CD8-positive, alpha-beta T cell (primary cell): ENCODE measurements at regions of chr1 and their contacts with region 1.

Region 1: DNA sequence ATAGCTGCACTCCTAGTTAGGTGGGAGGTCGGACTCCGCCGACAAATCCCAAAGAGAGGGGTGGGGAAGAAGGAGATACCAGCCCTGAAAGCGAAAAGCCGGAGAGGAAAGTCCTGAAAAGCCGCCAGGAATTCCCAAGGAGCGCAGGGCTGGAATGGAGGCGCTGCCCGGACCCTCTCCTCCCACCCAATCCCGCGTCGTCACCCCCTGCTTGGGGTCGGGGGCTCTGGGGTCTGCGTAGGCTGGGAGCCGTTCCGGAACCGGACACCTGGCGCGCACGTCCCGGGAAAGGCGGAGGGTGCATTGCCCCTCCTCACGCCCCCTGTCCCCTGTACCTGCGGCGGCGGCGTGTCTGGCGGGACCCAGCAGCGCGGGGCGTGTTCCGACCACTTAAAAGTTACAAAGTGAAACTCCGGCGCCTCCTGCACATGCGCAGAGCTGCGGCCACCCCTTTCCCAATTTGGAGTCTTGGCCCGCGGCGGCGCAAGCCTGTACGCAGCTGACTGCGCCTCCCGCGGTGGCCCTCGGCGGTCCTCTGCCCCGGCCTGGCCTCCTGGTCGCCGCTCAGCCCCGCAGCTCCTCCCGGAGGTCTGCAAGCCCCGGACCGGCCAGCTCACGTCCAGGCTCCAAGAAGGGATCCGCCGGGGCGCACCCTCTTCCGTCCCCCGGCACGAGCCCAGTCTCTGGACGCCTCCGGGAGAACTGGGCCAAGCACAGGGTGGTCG is at the start of gene TMEM63A:
- DNase-seq: peak; percentile 78 to 95 (median 92)
- ATAC-seq: peak; percentile 72
- H3K4me3 ChIP-seq: peak within 1 kb of the TSS; percentile 85 to 100
- H3K4me3 Mint-ChIP-seq: peak within 1 kb of the TSS; percentile 94
- H3K27ac ChIP-seq: peak within 1 kb of the TSS; percentile 65 to 84
- H3K27ac Mint-ChIP-seq: peak within 1 kb of the TSS; percentile 97
- H3K4me1 ChIP-seq: peaks cover 42% of the 10 kb centered on the region
- H3K4me1 Mint-ChIP-seq: peaks cover 52% of the 10 kb centered on the region
- H3K27me3 ChIP-seq: no peaks in the 10 kb centered on the region
- H3K27me3 Mint-ChIP-seq: no peaks in the 10 kb centered on the region
- CTCF ChIP-seq: no peak
- total RNA-seq, gene TMEM63A: 132 to 144 TPM

Region 2: DNA sequence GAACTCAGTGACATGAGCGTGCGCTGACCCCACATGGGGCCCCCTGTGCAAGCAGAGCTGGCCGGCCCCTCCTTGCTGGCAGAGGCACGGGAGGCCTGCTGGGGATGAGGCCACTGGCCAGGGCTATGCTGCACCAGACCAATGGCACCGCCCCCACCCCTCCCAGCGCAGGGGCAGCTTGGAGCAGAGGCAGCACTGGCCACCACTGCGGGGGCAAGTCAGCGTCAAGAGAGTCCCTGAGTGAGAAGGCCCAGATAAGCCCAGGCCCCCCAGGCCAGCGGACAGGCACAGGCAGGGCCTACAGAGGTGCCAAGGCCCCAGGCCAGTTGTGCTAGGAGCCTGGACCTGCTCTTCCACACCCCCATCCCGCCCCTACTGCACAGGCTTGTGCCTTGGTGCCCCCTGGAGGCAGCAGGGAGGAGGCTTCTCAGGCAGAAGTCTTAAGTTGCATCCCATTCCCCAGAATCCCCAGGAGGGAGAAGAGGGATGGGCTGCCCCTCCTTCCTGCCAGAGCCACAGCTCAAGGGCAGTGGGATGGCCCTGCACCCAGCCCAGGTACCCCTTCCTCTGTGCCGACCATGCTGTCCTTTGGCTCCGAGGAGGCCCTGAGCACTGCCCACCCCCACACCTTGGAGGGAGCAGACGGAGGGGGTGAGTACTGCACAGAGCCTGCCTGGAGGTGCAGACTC is 36.4 kb before region 1 on chr1:
- CTCF ChIA-PET with region 1: interaction called, 6 read pairs
- POLR2A ChIA-PET with region 1: interaction called, 27 read pairs
- intact Hi-C with region 1: loop called in 1 of 2 experiments (anchors 2 kb)
- DNase-seq: peak in 5 of 9 experiments; percentile 27 to 51 (median 39)
- ATAC-seq: no peak
- H3K4me3 ChIP-seq: no peak overlapping the region
- H3K4me3 Mint-ChIP-seq: no peak overlapping the region
- H3K27ac ChIP-seq: no peak overlapping the region
- H3K27ac Mint-ChIP-seq: peak overlapping the region; percentile 52
- H3K4me1 ChIP-seq: peaks cover 54% of the 10 kb centered on the region
- H3K4me1 Mint-ChIP-seq: peaks cover 64% of the 10 kb centered on the region
- H3K27me3 ChIP-seq: no peaks in the 10 kb centered on the region
- H3K27me3 Mint-ChIP-seq: no peaks in the 10 kb centered on the region
- CTCF ChIP-seq: peak; percentile 16

Region 3: GRCh38 chr1:225866061-225866837 is 15.9 kb before region 1 on chr1:
- CTCF ChIA-PET with region 1: interaction called, 6 read pairs
- POLR2A ChIA-PET with region 1: interaction called, 29 read pairs
- intact Hi-C with region 1: loop called (anchors 1 kb)
- DNase-seq: peak in 8 of 9 experiments; percentile 57 to 87 (median 78)
- ATAC-seq: peak; percentile 88
- H3K4me3 ChIP-seq: no peak overlapping the region
- H3K4me3 Mint-ChIP-seq: peak overlapping the region; percentile 55
- H3K27ac ChIP-seq: peak overlapping the region; percentile 27 to 54
- H3K27ac Mint-ChIP-seq: peak overlapping the region; percentile 92
- H3K4me1 ChIP-seq: peaks cover 30% of the 10 kb centered on the region
- H3K4me1 Mint-ChIP-seq: peaks cover 51% of the 10 kb centered on the region
- H3K27me3 ChIP-seq: no peaks in the 10 kb centered on the region
- H3K27me3 Mint-ChIP-seq: no peaks in the 10 kb centered on the region
- CTCF ChIP-seq: no peak

Region 4: GRCh38 chr1:225896937-225897549 is 14.9 kb after region 1 on chr1:
- CTCF ChIA-PET with region 1: interaction called, 21 read pairs
- POLR2A ChIA-PET with region 1: interaction called, 148 read pairs
- intact Hi-C with region 1: loop called (anchors 1 kb)
- DNase-seq: peak; percentile 46 to 96 (median 71)
- ATAC-seq: peak; percentile 90
- H3K4me3 ChIP-seq: peak overlapping the region; percentile 18 to 38
- H3K4me3 Mint-ChIP-seq: peak overlapping the region; percentile 74
- H3K27ac ChIP-seq: peak overlapping the region; percentile 72 to 80
- H3K27ac Mint-ChIP-seq: peak overlapping the region; percentile 99
- H3K4me1 ChIP-seq: peaks cover 42% of the 10 kb centered on the region
- H3K4me1 Mint-ChIP-seq: peaks cover 56% of the 10 kb centered on the region
- H3K27me3 ChIP-seq: no peaks in the 10 kb centered on the region
- H3K27me3 Mint-ChIP-seq: no peaks in the 10 kb centered on the region
- CTCF ChIP-seq: no peak

Region 5: DNA sequence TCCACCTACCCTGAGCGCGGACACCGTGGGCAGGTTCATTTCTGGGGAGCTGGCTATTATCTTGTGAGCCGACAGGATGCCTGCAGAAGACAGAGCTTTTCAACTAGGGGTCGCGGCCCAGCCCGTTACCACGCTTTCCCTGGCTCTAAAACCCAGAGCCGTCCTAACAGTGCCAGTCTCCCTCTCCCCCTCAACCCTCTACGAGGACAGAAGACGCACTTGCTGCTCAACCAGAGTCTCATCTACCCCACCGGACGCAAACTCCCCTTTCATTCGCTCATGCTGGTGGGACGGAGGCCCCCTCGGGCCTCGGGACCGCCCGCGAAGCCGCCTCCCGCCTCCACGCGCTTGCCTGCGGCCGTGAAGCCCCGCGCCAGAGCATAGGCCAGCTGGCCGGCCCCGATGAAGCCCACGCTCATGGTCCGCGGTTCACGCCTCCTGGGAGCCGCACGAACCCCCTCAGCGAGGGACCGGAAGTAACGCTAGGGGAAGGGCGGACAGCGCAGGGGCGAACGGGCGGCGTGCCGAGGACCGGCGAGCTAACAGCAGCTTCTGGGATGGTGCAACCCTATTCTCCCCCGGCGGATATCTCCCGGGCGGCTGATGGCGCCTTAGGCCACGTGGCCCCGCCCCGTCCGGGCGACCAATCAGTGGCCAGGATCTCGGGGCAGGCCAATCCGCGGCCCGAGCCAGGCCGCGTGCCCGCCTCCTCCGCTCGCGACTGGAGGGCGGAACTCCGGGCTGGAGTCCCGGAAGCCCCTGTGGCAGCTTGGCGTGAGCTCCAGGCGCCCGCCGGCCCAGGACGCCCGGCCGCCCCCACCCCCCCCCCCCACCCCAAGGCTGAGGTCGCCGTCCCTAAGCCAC is 41.8 kb after region 1 on chr1 and contains the start of gene PYCR2:
- CTCF ChIA-PET with region 1: interaction called, 5 read pairs
- POLR2A ChIA-PET with region 1: interaction called, 27 read pairs
- intact Hi-C with region 1: loop called (anchors 1 to 2 kb)
- DNase-seq: peak; percentile 90 to 98 (median 92)
- ATAC-seq: peak; percentile 98
- H3K4me3 ChIP-seq: peak within 1 kb of the TSS; percentile 75 to 79
- H3K4me3 Mint-ChIP-seq: peak within 1 kb of the TSS; percentile 94
- H3K27ac ChIP-seq: peak within 1 kb of the TSS; percentile 75 to 91
- H3K27ac Mint-ChIP-seq: peak within 1 kb of the TSS; percentile 93
- H3K4me1 ChIP-seq: peaks cover 75% of the 10 kb centered on the region
- H3K4me1 Mint-ChIP-seq: peaks cover 63% of the 10 kb centered on the region
- H3K27me3 ChIP-seq: no peaks in the 10 kb centered on the region
- H3K27me3 Mint-ChIP-seq: no peaks in the 10 kb centered on the region
- CTCF ChIP-seq: no peak
- total RNA-seq, gene PYCR2: 27.3 to 30.6 TPM